ENCODE measurements at regions of chr6 and their contacts with region 1.

Region 1: DNA sequence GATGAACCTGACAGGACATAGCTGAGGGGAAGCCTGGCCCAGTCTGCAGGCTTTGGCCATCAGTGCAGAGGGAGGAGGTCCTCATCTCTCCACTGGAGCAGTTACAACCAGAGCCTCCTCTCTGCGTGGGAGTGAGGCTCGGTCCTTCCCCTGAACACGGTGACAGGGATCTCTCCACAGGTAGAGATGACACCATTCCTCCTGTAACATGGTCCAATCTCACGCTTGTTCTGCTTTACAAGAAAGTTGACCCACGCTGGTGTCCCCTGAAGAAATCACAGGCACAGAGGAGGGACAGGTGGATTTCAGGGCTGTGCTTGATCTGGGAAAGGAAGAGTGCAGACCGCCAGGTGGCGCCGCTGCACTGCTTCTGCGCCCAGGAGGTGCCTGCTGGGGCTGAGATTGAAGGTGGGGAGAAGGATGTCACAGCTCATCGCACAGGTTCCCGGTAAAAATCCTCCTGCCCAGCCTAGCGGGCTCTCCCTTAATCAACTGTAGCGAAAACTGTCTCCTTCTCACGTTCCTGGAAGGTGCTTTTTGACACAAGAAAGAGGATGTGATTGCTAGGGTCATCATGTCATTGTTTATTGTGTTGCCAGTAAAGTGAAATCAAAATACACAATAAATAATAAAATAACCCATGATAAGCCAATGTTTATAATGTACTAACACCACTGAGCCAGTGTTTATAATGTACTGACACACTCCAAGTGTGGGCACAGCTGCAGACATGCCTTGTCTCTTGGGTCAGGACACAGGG is 20.4 kb downstream of the HLA-G start:
- DNase-seq: peak; percentile 66
- H3K4me3 ChIP-seq: no peak overlapping the region
- H3K27ac ChIP-seq: no peak overlapping the region
- H3K4me1 ChIP-seq: no peaks in the 10 kb centered on the region
- H3K27me3 ChIP-seq: peaks cover 67% of the 10 kb centered on the region
- CTCF ChIP-seq: peak; percentile 91

Region 2: GRCh38 chr6:29696155-29697125 is 151.6 kb before region 1 on chr6:
- CTCF ChIA-PET with region 1: interaction called, 10 read pairs
- POLR2A ChIA-PET with region 1: no interaction called
- intact Hi-C with region 1: no loop called
- DNase-seq: peak; percentile 48
- H3K4me3 ChIP-seq: no peak overlapping the region
- H3K27ac ChIP-seq: no peak overlapping the region
- H3K4me1 ChIP-seq: no peaks in the 10 kb centered on the region
- H3K27me3 ChIP-seq: no peaks in the 10 kb centered on the region
- CTCF ChIP-seq: peak; percentile 66

Region 3: GRCh38 chr6:29953686-29954085 is 105.6 kb after region 1 on chr6:
- CTCF ChIA-PET with region 1: no interaction called
- POLR2A ChIA-PET with region 1: no interaction called
- intact Hi-C with region 1: no loop called
- DNase-seq: no peak
- H3K4me3 ChIP-seq: no peak overlapping the region
- H3K27ac ChIP-seq: no peak overlapping the region
- H3K4me1 ChIP-seq: no peaks in the 10 kb centered on the region
- H3K27me3 ChIP-seq: no peaks in the 10 kb centered on the region
- CTCF ChIP-seq: no peak

Region 4: DNA sequence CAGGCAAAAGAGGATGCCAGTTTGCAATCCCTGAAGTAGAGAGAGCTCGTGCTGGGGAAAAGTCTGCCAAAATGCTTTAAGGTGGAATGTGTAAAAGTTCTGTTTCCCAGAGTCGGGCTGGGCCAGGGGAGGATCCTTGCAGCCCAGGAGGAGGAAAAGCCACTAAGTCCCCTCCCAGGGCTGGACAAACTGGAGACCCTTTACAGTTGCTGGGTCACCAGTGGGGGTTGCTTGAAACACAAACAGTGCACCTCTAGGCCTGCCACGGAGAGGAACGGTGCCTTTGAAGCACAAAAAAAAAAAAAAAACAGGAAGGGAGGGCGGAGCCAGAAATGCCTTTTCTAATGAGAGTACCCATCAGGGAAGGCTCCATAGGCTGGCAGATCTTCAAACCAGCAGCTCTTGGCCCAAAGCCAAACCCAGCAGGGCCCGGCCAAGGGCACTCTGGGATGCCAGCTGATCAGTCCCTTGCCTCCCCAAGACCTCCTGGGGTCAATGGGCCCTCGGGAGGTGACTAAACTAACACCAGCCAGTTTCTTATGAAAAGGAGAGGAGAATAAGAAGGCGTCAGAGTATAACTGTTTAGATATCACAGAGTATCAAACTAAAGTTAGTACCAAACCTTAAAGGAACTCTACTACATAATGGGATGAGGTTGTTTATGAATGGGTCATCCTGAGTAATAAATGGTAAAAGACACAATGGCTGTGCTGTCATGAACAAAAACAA is 118.0 kb after region 1 on chr6:
- CTCF ChIA-PET with region 1: no interaction called
- POLR2A ChIA-PET with region 1: no interaction called
- intact Hi-C with region 1: loop called (anchors 1 kb)
- DNase-seq: peak; percentile 85
- H3K4me3 ChIP-seq: peak overlapping the region; percentile 44
- H3K27ac ChIP-seq: peak overlapping the region; percentile 97
- H3K4me1 ChIP-seq: peaks cover 42% of the 10 kb centered on the region
- H3K27me3 ChIP-seq: no peaks in the 10 kb centered on the region
- CTCF ChIP-seq: no peak

Region 5: GRCh38 chr6:30013291-30013922 is 165.4 kb after region 1 on chr6:
- CTCF ChIA-PET with region 1: interaction called, 7 read pairs
- POLR2A ChIA-PET with region 1: no interaction called
- intact Hi-C with region 1: loop called (anchors 1 kb)
- DNase-seq: peak; percentile 24
- H3K4me3 ChIP-seq: no peak overlapping the region
- H3K27ac ChIP-seq: no peak overlapping the region
- H3K4me1 ChIP-seq: no peaks in the 10 kb centered on the region
- H3K27me3 ChIP-seq: peaks cover 4% of the 10 kb centered on the region
- CTCF ChIP-seq: peak; percentile 80

Region 6: DNA sequence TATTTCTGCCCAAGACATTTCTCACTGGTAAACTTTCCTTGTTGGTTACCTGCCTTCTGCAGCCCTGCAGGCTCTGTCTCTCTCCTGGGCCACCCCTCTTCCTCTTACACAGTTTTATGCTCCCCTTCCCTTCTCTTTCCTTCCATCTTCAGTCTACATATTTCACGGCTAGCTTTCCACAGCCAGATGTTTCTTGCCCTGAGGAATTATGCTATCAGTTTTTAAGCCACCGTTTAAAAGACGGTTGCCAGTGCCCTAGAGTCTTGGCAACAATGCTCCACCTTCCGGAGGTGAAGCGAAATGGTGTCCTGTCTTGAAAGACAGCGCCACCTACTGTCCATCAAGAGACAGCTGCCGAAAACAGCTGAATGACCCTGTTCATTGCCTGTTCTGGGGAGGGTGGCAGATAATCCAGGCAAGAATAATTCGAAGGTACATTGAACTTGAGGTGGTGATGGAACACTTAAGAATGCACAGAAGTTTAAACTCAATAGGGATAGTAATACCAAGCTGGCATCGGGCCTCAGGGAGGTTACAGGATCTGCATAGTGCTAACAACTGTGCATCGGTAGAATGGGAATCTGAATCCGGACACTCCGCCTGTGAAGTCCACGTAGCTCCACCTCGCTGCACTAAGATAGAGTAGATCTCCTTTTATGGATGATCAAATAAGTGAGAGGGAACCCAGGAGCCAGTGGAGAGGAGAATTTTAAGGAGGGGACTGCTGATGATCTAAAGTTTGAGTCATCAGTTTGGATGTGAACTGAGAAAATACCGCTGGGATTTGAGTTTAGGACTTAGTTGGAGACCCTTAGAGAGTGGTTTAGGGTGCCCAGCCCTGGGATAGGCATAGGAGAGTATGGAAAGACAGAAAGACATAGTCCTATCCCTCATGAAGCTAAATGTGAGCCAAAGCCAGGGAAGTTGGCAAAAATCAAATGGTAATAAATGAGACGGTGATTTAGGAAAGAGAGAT is 283.1 kb after region 1 on chr6:
- CTCF ChIA-PET with region 1: no interaction called
- POLR2A ChIA-PET with region 1: no interaction called
- intact Hi-C with region 1: loop called (anchors 5 kb)
- DNase-seq: peak; percentile 88
- H3K4me3 ChIP-seq: no peak overlapping the region
- H3K27ac ChIP-seq: no peak overlapping the region
- H3K4me1 ChIP-seq: no peaks in the 10 kb centered on the region
- H3K27me3 ChIP-seq: peaks cover 41% of the 10 kb centered on the region
- CTCF ChIP-seq: peak; percentile 100

Region 7: GRCh38 chr6:30169658-30170614 is 321.9 kb after region 1 on chr6:
- CTCF ChIA-PET with region 1: no interaction called
- POLR2A ChIA-PET with region 1: no interaction called
- intact Hi-C with region 1: loop called (anchors 2 kb)
- DNase-seq: peak; percentile 73
- H3K4me3 ChIP-seq: no peak overlapping the region
- H3K27ac ChIP-seq: no peak overlapping the region
- H3K4me1 ChIP-seq: no peaks in the 10 kb centered on the region
- H3K27me3 ChIP-seq: peaks cover 56% of the 10 kb centered on the region
- CTCF ChIP-seq: peak; percentile 79